ENCODE measurements at regions of chr19 and their contacts with region 1.

Region 1: DNA sequence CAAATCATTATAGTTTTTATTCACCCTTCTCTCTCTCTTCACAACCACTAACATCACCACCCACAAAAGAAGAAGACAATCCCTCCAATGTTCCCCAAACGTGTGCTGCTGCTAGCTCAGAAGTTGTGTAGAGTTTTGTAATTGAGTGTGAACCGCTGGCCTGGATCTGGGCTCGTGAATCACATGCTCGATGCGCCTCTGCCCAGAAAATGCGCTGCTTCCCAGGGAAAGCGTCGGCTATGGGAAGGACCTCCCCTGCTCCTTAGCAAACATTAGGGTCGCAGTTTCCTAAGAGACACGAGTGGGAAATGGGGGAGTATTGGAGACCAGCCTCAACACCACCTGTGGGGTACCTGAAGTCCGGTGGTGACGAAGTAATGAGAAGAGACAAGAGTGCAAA is 38.4 kb upstream of the ZNF726 start:
- DNase-seq: no peak
- ATAC-seq: no peak

Region 2: GRCh38 chr19:23823952-23824389 is 52.3 kb before region 1 on chr19:
- intact Hi-C with region 1: no loop called
- DNase-seq: no peak
- ATAC-seq: no peak

Region 3: DNA sequence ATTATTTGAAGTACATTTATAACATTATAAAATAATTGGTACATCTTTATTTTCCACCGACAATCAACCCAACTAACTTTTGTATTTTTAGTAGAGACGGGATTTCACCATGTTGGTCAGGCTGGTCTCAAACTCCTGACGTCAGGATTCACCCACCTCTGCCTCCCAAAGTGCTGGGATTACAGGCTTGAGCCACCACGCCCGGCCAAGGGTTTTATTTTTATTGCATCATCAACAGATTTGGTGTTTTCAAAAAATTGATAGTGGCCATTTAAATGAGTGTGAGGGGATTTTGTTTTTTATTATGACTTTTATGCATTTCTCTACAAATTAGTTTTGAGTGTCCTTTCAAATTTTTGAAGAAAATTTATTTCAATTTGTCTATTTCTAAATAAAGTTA is 49.0 kb after region 1 on chr19:
- intact Hi-C with region 1: loop called (anchors 2 kb)
- DNase-seq: no peak
- ATAC-seq: no peak

Region 4: DNA sequence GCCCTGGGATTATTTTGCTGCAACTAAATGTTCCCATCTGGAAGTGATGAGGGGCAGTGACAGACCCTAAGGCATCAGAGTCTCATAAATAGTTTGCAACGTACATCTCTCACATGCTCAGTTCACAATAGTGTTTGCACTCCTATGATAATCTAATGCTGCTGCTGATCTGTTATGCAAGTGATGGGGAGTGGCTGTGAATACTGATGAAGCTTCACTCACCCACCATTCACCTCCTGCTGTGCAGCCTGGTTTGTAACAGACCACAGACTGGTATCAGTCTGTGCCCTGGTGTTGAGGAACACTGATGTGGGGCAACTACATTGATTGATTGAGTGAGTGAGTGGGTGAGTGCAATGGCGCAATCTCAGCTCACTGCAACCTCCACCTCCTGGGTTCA is 93.4 kb after region 1 on chr19:
- intact Hi-C with region 1: loop called (anchors 5 kb)
- DNase-seq: no peak
- ATAC-seq: no peak